Ascending aorta (tissue), 2 donors: ENCODE measurements at regions of chr15 and their contacts with region 1.

Region 1: GRCh38 chr15:84748274-84749110 is at the start of gene ZNF592:
- DNase-seq: peak; percentile 24 to 92
- H3K4me3 ChIP-seq: peak within 1 kb of the TSS; percentile 82 to 94
- H3K27ac ChIP-seq: peak within 1 kb of the TSS; percentile 99
- H3K4me1 ChIP-seq: peaks cover 7 to 42% of the 10 kb centered on the region in 2 donors
- H3K27me3 ChIP-seq: no peaks in the 10 kb centered on the region
- CTCF ChIP-seq: peak in 1 of 3 experiments; percentile 89
- total RNA-seq, gene ZNF592: 36.1 TPM

Region 2: GRCh38 chr15:84600851-84601838 is 147.3 kb before region 1 on chr15 and contains the start of gene ZSCAN2:
- intact Hi-C with region 1: loop called (anchors 2 kb)
- DNase-seq: peak; percentile 90 to 98
- H3K4me3 ChIP-seq: peak within 1 kb of the TSS; percentile 85 to 91
- H3K27ac ChIP-seq: peak within 1 kb of the TSS; percentile 43 to 72
- H3K4me1 ChIP-seq: peaks cover 0 to 13% of the 10 kb centered on the region in 2 donors
- H3K27me3 ChIP-seq: no peaks in the 10 kb centered on the region
- CTCF ChIP-seq: no peak
- total RNA-seq, gene ZSCAN2: 4.6 TPM

Region 3: GRCh38 chr15:84716036-84716799 is 32.3 kb before region 1 on chr15 and contains the start of gene SEC11A:
- intact Hi-C with region 1: loop called (anchors 1 kb)
- DNase-seq: peak; percentile 88 to 98
- H3K4me3 ChIP-seq: peak within 1 kb of the TSS; percentile 70 to 77
- H3K27ac ChIP-seq: peak within 1 kb of the TSS; percentile 88
- H3K4me1 ChIP-seq: peaks cover 3 to 10% of the 10 kb centered on the region in 2 donors
- H3K27me3 ChIP-seq: no peaks in the 10 kb centered on the region
- CTCF ChIP-seq: no peak
- total RNA-seq, gene SEC11A: 31.6 TPM

Region 4: GRCh38 chr15:84727429-84727828 is 21.1 kb before region 1 on chr15:
- intact Hi-C with region 1: no loop called
- DNase-seq: no peak
- H3K4me3 ChIP-seq: no peak overlapping the region
- H3K27ac ChIP-seq: no peak overlapping the region
- H3K4me1 ChIP-seq: no peaks in the 10 kb centered on the region
- H3K27me3 ChIP-seq: no peaks in the 10 kb centered on the region
- CTCF ChIP-seq: no peak

Region 5: DNA sequence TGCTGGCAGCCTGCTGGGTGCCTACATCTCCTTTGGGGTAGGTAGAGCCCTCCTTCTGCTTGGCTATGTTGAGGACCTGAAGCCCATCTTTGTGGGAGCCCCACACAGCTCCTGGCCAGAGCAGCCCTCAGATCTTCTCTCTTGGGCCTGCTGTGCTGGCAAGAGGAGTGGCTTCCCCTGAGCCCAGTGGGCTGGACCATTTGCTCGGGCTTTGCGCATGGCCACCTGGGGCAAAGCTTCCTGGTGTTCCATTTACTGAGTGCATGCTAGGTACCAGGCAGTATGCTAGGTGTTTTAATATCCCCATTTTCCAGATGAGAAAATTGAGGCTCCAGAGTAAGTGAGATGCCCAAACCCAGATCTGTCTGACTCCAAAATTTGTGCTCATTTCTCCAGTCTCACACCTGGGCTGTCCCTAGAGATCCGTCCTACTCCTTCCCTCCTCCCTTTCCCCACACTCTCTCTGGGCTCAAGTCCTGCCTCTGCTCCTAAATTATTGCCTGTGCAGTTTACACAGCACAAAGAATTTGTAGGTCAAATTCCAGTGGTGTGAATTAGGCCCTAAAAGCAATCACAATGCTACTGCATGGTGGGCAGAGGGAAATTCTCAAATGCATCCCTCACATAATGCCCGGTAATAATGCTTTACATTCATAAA is 175.7 kb after region 1 on chr15:
- intact Hi-C with region 1: loop called (anchors 2 kb)
- DNase-seq: no peak
- H3K4me3 ChIP-seq: no peak overlapping the region
- H3K27ac ChIP-seq: peak overlapping the region; percentile 46 to 69
- H3K4me1 ChIP-seq: peaks cover 3 to 21% of the 10 kb centered on the region in 2 donors
- H3K27me3 ChIP-seq: no peaks in the 10 kb centered on the region
- CTCF ChIP-seq: no peak